PC-9 (cell line): ENCODE measurements at regions of chr11 and their contacts with region 1.

Region 1: DNA sequence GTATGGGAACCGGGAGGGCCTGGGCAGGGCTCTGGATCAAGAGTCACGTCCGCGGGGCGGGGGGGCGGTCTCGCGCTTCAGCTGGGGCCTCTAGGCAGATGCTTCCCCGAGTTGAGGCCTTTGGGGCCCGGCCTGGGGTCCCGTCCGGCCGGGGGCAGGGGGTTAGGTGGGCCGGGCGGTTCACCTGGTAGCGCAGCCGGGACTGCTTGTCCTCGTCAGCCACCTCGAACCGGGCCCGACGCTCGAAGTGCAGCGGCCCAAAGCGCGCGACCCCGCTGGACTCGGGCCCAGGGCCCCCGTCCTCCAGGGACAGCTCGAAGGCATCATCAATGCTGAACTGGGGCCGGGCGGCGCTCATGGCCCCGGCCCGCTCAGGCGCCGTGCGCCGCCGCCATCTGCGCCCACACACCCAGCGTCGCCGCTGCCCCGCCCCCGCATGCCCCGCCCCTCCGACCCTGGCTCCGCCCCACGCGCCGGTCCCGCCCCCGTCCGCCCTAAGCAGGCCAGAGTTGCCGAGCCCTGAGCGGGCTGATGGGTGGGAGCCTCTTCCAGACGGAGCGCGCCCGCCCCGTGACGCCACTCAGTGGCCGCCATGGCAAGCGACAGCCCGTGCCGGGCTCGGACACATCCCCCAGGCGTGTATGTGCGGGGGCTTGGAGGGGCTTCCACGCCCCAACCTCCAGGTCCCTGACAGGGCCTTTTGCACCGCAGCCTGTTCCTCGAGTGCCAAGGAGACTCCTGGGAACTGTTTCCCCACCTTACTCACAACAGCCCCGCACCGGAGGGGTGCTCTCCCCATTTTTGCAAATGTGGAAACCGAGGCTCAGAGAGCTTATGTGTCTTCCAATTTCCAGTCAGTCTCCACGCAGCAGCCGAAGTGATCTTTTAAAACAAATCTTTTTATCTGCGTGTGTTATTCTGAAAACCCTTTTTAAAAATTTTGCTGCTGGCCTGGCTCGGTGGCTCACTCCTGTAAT is at the start of gene TMEM134:
- DNase-seq: peak; percentile 80 to 91
- H3K4me3 ChIP-seq: peak within 1 kb of the TSS; percentile 92
- H3K27ac ChIP-seq: peak within 1 kb of the TSS; percentile 48
- H3K4me1 ChIP-seq: peaks cover 32% of the 10 kb centered on the region
- H3K27me3 ChIP-seq: no peaks in the 10 kb centered on the region
- CTCF ChIP-seq: peak; percentile 48
- total RNA-seq, gene TMEM134: 85.7 and 125 TPM in 2 replicates

Region 2: DNA sequence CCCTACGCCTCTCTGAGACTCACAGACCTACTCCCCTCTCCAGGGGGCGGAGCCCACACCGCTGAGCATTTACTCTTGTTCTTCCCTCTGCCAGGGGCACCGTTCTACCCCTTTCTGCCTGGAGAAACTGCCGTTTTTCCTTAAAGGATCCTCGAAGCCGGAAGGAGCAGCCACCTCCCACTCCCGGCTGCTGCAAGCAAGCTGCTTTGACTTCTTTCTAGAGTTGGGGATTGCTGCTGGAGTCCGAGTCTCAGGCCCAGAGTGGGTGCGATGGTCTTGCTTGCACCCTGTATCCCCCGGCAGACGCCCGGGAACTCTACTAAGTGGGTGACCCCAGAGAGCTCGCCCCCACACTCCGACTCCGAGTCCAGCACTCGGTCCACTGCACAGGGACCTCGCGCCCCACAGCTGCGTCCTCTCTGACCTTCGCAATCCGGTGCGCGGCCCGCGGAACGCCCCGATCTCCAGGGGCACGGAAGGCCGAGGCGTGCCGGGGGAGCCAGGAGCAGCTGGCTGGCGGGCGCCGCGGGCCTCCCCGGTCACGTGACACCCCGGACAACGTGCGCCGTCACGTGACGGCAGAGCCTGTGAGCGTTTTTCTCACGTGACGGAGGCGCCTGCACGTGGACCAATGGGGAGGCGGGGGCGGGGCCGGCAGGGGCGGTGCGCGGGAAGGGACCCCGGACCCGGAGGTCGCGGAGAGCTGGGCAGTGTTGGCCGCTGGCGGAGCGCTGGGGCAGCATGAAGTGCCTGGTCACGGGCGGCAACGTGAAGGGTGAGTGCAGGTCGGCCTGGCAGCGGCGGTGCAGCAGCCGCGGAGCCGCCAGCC is 77.6 kb before region 1 on chr11 and contains the start of gene RAD9A:
- CTCF ChIA-PET with region 1: no interaction called
- POLR2A ChIA-PET with region 1: no interaction called
- intact Hi-C with region 1: loop called (anchors 2 kb)
- DNase-seq: peak; percentile 82 to 94
- H3K4me3 ChIP-seq: peak within 1 kb of the TSS; percentile 89
- H3K27ac ChIP-seq: peak within 1 kb of the TSS; percentile 54
- H3K4me1 ChIP-seq: peaks cover 12% of the 10 kb centered on the region; the same call in 1 of the 2 replicates
- H3K27me3 ChIP-seq: no peaks in the 10 kb centered on the region
- CTCF ChIP-seq: no peak
- total RNA-seq, gene RAD9A: 62.8 and 79.8 TPM in 2 replicates

Region 3: DNA sequence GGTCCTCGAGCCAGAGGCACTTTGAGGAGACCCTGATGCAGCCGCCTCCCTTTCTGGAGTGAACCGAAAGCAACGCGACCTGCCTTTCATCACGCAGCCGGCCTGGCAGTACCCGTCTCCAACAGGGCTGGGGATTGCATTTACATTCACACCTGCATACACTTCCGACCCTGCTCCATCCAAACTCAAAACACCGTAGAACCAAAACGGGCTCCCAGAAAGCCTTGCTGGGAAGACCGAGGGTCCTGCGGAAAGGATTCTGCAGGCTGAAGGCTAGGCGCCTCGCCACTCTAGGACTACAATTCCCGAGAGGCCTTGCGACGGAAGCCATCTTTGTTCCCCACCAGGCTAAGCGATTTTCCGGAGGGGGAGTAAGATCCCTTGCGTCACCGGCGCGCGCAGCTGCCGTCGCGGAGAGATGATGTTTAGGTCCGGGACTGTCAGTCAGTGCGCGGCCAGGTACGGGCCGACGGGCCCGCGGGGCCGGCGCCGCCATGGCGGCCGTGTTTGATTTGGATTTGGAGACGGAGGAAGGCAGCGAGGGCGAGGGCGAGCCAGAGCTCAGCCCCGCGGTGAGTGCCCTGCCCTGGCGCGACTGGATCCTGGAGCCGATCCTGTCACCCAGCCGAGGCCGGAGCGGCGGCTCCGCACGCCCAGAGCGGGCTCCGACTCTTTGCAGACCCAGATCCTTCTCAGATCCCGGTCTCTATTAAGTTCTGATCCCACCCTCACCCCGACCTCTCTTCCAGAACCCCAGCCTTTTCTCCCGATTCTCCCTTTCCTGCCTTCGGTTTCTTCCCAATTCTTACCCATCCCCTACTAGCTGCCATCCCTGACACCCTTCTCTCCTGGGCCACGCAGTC is 40.8 kb before region 1 on chr11 and contains the start of gene RPS6KB2:
- CTCF ChIA-PET with region 1: interaction called, 4 read pairs
- POLR2A ChIA-PET with region 1: interaction called, 3 read pairs
- intact Hi-C with region 1: loop called (anchors 1 kb)
- DNase-seq: peak; percentile 91 to 98
- H3K4me3 ChIP-seq: peak within 1 kb of the TSS; percentile 95
- H3K27ac ChIP-seq: peak within 1 kb of the TSS; percentile 39
- H3K4me1 ChIP-seq: peaks cover 21% of the 10 kb centered on the region
- H3K27me3 ChIP-seq: no peaks in the 10 kb centered on the region
- CTCF ChIP-seq: no peak
- total RNA-seq, gene RPS6KB2: 52.0 and 54.0 TPM in 2 replicates

Region 4: GRCh38 chr11:67482825-67483798 is 14.0 kb after region 1 on chr11 and contains the start of gene AIP:
- CTCF ChIA-PET with region 1: no interaction called
- POLR2A ChIA-PET with region 1: no interaction called
- intact Hi-C with region 1: loop called (anchors 1 kb)
- DNase-seq: peak; percentile 96 to 98
- H3K4me3 ChIP-seq: peak within 1 kb of the TSS; percentile 61
- H3K27ac ChIP-seq: peak within 1 kb of the TSS; percentile 34
- H3K4me1 ChIP-seq: peaks cover 17% of the 10 kb centered on the region
- H3K27me3 ChIP-seq: no peaks in the 10 kb centered on the region
- CTCF ChIP-seq: peak; percentile 34; the same call in 1 of the 2 replicates
- total RNA-seq, gene AIP: 95.3 and 125 TPM in 2 replicates